ENCODE measurements at regions of chr11 and their contacts with region 1.

Region 1: DNA sequence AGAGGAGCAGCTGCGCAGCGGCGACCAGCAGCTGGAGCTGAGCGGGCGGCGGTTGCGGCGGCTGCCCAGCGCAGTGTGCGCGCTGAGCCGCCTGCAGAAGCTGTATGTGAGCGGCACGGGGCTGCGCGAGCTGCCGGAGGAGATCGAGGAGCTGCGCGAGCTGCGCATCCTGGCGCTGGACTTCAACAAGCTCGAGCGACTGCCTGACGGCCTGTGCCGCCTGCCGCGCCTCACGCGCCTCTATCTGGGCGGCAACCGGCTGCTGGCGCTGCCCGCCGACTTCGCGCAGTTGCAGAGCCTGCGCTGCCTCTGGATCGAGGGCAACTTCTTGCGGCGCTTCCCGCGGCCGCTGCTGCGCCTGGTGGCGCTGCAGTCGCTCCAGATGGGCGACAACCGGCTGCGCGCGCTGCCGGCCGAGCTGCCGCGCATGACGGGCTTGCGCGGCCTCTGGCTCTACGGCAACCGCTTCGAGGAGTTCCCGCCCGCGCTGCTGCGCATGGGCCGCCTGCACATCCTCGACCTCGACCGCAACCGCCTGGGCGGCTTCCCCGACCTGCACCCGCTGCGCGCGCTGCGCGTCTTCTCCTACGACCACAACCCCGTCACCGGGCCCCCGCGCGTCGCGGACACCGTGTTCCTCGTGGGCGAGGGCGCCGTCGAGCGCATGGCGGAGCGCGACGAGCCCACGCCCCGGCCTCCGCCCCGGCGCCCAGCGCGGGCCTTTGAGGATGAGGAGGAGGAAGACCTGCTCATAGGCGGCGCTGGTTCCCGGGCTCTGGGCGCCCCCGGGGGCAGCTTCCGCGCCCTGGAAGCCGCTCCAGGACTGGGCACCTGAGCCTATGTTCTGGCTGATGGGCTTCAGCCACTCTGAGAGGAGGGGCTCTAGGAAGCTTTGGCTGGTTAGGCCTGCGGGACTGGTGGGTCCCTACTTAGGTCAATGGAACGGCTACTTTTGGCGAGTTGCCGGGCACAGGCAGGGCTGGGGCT is 787 bp downstream of the LRRC10B start:
- DNase-seq: peak; percentile 79 to 90
- ATAC-seq: peak; percentile 87 to 95
- H3K4me3 ChIP-seq: peak overlapping the region; percentile 44
- H3K27ac ChIP-seq: peak overlapping the region in 1 of 2 experiments; percentile 66; a peak in 3 of 6 replicates
- H3K4me1 ChIP-seq: peaks cover 13% of the 10 kb centered on the region
- CTCF ChIP-seq: peak; percentile 54
- EP300 ChIP-seq: no peak
- POLR2A ChIP-seq: no peak
- RAD21 ChIP-seq: peak in 1 of 2 experiments; percentile 20; a peak in 3 of 5 replicates

Region 2: DNA sequence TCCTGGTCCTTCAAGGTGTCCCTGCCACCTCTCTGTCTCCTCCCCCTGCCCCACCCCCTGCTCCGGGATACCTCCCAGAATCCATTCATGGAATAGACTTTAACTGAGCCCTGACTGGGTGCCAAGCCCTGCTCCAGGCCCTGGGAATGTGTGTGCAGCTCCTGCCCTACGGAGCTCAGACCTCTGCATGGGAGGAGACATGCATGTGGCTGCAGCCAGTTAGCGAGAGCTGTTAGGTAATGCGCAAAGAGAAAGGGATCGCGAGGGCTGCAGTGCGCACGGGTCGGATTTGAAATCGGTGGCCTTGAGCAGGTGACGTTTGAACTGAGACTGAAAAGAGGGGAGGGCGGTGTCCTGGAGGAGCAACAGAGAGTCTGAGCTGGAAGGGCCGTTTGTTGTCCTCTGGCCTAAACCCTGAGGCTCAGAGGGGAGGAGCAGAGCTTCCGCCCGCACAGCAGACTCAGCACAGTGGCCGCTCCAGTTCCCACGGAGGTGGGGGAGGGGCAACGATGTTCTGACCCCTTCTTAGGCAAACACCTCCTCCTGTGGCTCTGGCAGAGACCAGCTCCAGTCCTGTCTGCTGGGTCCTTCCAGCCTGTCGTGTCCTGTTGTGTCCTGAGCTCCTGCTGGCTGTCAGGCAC is 20.6 kb before region 1 on chr11:
- CTCF ChIA-PET with region 1: interaction called, 13 read pairs
- POLR2A ChIA-PET with region 1: no interaction called
- DNase-seq: no peak
- ATAC-seq: peak in 1 of 2 experiments; percentile 14; a peak in 1 of 6 replicates
- H3K4me3 ChIP-seq: no peak overlapping the region
- H3K27ac ChIP-seq: no peak overlapping the region
- H3K4me1 ChIP-seq: no peaks in the 10 kb centered on the region
- CTCF ChIP-seq: no peak
- EP300 ChIP-seq: no peak
- POLR2A ChIP-seq: no peak
- RAD21 ChIP-seq: no peak

Region 3: GRCh38 chr11:61495801-61496597 is 13.3 kb before region 1 on chr11:
- CTCF ChIA-PET with region 1: interaction called, 12 read pairs
- POLR2A ChIA-PET with region 1: no interaction called
- DNase-seq: no peak
- ATAC-seq: no peak
- H3K4me3 ChIP-seq: no peak overlapping the region
- H3K27ac ChIP-seq: no peak overlapping the region
- H3K4me1 ChIP-seq: no peaks in the 10 kb centered on the region
- CTCF ChIP-seq: no peak
- EP300 ChIP-seq: no peak
- POLR2A ChIP-seq: no peak
- RAD21 ChIP-seq: no peak

Region 4: GRCh38 chr11:61602775-61603569 is 93.6 kb after region 1 on chr11:
- CTCF ChIA-PET with region 1: no interaction called
- POLR2A ChIA-PET with region 1: no interaction called
- DNase-seq: no peak
- ATAC-seq: no peak
- H3K4me3 ChIP-seq: no peak overlapping the region
- H3K27ac ChIP-seq: no peak overlapping the region
- H3K4me1 ChIP-seq: no peaks in the 10 kb centered on the region
- CTCF ChIP-seq: no peak
- EP300 ChIP-seq: no peak
- POLR2A ChIP-seq: no peak
- RAD21 ChIP-seq: no peak